Heart right ventricle (tissue), 16 donors: ENCODE measurements at regions of chr18 and their contacts with region 1.

Region 1: DNA sequence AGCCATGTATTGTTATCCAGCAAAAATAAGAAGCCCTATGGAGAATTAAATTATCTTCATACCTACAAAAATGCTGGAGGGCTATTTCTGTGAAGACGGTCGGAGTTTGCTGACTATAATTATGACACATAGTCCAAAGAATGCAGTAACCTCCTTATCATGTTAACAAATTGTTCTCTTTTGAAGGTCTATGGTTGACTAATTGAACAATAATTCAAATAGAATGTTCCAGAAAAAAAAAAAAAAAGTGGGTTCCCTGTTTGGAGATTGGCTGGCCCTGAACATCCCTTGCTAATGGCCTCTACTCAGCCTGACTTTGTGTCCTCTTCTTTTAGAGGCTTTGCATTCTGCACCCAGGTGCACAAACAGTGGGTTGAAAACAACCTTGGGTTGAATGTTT is 82.7 kb upstream of the CCBE1 start:
- DNase-seq: no peak
- ATAC-seq: no peak
- H3K4me3 ChIP-seq: no peak overlapping the region
- H3K27ac ChIP-seq: no peak overlapping the region
- H3K4me1 ChIP-seq: no peaks in the 10 kb centered on the region
- H3K27me3 ChIP-seq: no peaks in the 10 kb centered on the region
- CTCF ChIP-seq: no peak

Region 2: GRCh38 chr18:59718108-59718463 is 61.9 kb before region 1 on chr18:
- intact Hi-C with region 1: loop called in 1 of 10 experiments (anchors 2 kb)
- DNase-seq: no peak
- ATAC-seq: no peak
- H3K4me3 ChIP-seq: no peak overlapping the region
- H3K27ac ChIP-seq: no peak overlapping the region
- H3K4me1 ChIP-seq: peaks cover 0 to 2% (median 0%) of the 10 kb centered on the region in 9 donors
- H3K27me3 ChIP-seq: peaks cover 0 to 4% (median 0%) of the 10 kb centered on the region in 7 donors
- CTCF ChIP-seq: no peak